ENCODE measurements at regions of chr9 and their contacts with region 1.

Region 1: GRCh38 chr9:85053206-85053786 is 383.8 kb downstream of the NTRK2 start:
- DNase-seq: no peak

Region 2: GRCh38 chr9:84315278-84315877 is 737.9 kb before region 1 on chr9:
- intact Hi-C with region 1: loop called in 1 of 2 experiments (anchors 5 kb)
- DNase-seq: no peak

Region 3: GRCh38 chr9:84880835-84881234 is 172.5 kb before region 1 on chr9:
- intact Hi-C with region 1: no loop called
- DNase-seq: no peak

Region 4: DNA sequence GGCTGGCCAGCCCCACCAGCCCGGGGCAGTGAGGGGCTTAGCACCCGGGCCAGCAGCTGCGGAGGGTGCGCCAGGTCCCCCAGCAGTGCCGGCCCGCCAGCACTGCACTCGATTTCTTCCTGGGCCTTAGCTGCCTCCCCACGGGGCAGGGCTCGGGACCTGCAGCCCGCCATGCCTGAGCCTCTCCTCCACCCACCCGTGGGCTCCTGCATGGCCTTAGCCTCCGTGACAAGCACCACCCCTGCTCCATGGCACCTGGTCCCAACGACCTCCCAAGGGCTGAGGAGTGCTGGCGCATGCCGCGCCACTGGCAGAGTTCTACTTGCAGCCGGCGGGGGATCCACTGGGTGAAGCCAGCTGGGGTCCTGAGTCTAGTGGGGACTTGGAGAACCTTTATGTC is 235.8 kb after region 1 on chr9:
- intact Hi-C with region 1: no loop called
- DNase-seq: peak; percentile 77

Measured in posterior vena cava (tissue), 2 donors.